AG04450 (cell line): ENCODE measurements at regions of chr1 and their contacts with region 1.

Region 1: GRCh38 chr1:184664042-184664655 is 90.5 kb downstream of the EDEM3 start:
- DNase-seq: peak; percentile 27
- H3K4me3 ChIP-seq: peak overlapping the region; percentile 57
- H3K27ac ChIP-seq: no peak overlapping the region
- H3K27me3 ChIP-seq: peaks cover 6% of the 10 kb centered on the region
- CTCF ChIP-seq: peak; percentile 95

Region 2: DNA sequence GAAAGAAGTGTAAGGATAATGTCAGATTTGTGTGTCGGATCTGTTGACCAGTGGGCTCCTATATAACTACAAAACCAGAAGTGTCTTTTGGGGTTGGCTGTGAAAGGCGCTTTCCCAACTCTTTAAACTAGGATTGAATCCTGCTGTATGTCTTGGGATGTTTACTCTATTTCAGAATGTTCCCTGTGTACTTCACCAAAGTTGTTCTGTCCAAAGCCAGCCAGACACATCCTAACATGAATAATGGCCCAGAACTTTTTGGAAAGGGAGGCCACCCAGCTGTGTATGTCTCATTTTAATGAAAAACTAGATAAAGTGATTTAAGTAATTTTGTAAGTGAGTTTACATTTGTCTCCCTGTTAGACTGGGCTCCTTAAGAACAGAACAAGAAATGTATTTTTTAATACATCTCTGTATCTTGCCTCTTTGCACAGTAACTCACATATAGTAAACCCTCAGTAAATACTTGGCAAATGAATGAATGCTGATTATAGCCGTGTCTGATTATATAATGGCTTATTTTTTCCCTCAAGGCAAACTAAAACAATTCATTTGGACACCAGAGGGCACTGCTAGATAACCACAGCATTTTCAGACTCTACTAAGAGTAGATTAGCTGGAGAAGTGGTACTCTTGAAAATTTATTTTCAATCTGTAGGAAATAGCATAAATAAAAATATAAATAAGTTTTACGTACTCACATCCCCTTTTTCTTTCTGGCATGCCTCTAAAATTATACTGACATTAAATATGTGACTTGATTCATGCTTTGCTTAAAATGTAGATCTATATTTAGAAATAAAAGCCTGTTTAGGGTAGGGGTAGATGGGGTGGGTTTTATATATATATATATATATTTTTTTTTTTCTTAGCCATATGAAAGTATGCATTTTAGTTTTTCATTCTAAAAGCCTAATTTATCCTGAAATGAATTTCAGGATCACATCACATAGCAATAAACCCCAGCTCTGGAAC is 588.8 kb before region 1 on chr1:
- CTCF ChIA-PET with region 1: interaction called, 37 read pairs
- POLR2A ChIA-PET with region 1: no interaction called
- DNase-seq: no peak
- H3K4me3 ChIP-seq: no peak overlapping the region
- H3K27ac ChIP-seq: no peak overlapping the region
- H3K27me3 ChIP-seq: no peaks in the 10 kb centered on the region
- CTCF ChIP-seq: peak; percentile 80

Region 3: GRCh38 chr1:184242507-184242943 is 421.6 kb before region 1 on chr1:
- CTCF ChIA-PET with region 1: interaction called, 16 read pairs
- POLR2A ChIA-PET with region 1: no interaction called
- DNase-seq: peak; percentile 49
- H3K4me3 ChIP-seq: no peak overlapping the region
- H3K27ac ChIP-seq: no peak overlapping the region
- H3K27me3 ChIP-seq: peaks cover 6% of the 10 kb centered on the region
- CTCF ChIP-seq: no peak

Region 4: GRCh38 chr1:184399192-184399847 is 264.8 kb before region 1 on chr1:
- CTCF ChIA-PET with region 1: interaction called, 10 read pairs
- POLR2A ChIA-PET with region 1: no interaction called
- DNase-seq: no peak
- H3K4me3 ChIP-seq: no peak overlapping the region
- H3K27ac ChIP-seq: no peak overlapping the region
- H3K27me3 ChIP-seq: no peaks in the 10 kb centered on the region
- CTCF ChIP-seq: no peak

Region 5: DNA sequence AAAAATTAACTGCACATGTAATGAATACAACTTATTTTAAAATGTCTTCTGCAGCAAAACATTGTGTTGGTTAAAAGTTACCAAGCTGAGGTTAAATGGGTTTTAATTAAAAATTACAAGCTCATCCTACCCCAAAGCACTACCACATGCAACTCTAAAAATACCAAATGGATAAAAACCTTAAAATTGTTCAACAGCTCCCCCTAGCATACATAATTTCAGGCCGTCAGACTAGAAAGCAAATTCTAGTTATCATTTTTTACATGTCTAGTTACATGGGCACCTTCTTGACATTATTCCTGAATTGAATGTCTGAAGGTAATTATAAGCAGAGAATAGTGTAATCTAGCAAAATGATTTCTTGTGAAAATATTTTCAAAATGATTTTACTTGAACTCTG is 100.8 kb before region 1 on chr1:
- CTCF ChIA-PET with region 1: interaction called, 10 read pairs
- POLR2A ChIA-PET with region 1: no interaction called
- DNase-seq: no peak
- H3K4me3 ChIP-seq: no peak overlapping the region
- H3K27ac ChIP-seq: no peak overlapping the region
- H3K27me3 ChIP-seq: no peaks in the 10 kb centered on the region
- CTCF ChIP-seq: peak; percentile 56

Region 6: DNA sequence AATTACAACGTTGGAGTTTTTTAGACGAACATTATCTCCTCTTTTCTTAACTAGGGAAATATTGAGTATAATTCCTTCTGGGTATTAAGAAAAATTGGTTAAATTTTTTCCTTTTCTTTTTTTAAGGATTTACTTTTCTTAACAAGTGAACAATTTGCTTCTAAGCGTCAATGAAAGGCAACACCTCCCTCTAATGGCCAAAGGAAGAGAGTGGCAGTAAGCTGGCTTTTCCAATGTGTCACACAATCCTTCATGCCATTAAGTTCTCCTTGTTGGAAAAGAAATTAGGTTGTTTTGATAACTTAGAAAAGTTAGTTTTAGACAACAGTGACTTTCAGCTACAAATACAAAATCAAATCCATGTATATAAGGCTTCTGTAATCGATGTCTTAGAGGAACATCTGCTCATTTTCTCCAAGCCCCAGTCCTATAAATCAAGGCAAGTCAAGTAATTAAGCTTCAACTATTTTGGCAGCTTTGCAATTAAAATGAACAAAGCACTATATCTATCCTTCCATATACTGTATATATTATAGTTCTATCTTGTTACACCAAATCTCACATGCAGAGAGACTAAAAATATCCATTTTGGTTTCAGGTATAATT is 27.7 kb after region 1 on chr1:
- CTCF ChIA-PET with region 1: interaction called, 35 read pairs
- POLR2A ChIA-PET with region 1: no interaction called
- DNase-seq: peak; percentile 3
- H3K4me3 ChIP-seq: no peak overlapping the region
- H3K27ac ChIP-seq: no peak overlapping the region
- H3K27me3 ChIP-seq: no peaks in the 10 kb centered on the region
- CTCF ChIP-seq: peak; percentile 87

Region 7: GRCh38 chr1:184915463-184916090 is 251.4 kb after region 1 on chr1:
- CTCF ChIA-PET with region 1: no interaction called
- POLR2A ChIA-PET with region 1: no interaction called
- DNase-seq: no peak
- H3K4me3 ChIP-seq: no peak overlapping the region
- H3K27ac ChIP-seq: no peak overlapping the region
- H3K27me3 ChIP-seq: no peaks in the 10 kb centered on the region
- CTCF ChIP-seq: no peak